Activated naive CD4-positive, alpha-beta T cell treated with anti-CD3 and anti-CD28 coated beads for 36 hours (primary cell): ENCODE measurements at regions of chr13 and their contacts with region 1.

Region 1: DNA sequence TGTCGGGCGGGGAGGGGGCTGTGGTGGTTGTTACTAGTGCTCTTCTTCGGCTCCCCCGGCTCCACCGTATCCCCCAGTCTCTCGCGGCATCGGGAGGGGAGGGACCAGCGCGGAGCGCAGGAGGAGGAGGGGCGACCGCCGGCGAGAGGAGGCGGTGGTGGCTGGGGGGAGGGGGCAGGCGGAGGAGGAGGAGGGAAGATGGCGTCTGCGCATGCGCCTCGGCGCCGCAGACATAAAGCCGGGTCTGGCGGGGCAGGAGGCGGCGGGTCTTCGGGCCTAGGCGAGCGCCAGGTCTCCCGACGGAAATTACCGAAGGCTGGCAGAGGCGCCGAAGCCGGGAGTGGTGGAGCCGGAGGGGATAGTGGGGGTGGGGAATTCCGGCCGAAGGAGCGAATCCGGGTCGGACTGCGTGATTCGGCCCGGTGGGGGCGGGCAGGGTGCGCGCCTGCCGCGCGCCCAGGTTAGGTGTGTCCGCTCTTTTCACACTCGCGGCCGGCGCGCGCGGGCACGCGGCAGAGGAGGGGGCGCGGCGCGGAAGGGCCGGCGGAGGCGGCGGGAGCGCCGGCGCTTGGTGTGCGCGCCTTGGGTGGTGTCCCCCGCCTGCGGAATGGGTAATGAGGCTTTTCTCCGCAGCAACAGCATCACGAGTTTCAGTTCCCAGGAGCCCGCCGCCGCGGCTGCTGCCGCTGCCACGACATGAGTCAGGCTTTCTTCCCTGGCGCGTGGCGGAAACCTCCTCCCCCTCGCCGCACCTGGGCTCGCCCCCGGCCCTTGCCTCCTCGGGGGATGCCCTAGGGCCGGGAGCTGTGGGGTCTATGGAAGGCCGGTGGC is 1.3 kb upstream of the TSC22D1 start:
- DNase-seq: peak; percentile 95
- H3K4me3 Mint-ChIP-seq: peak overlapping the region; percentile 95
- H3K27ac Mint-ChIP-seq: peak overlapping the region; percentile 88
- H3K4me1 Mint-ChIP-seq: peaks cover 34% of the 10 kb centered on the region
- H3K27me3 Mint-ChIP-seq: peaks cover 2% of the 10 kb centered on the region

Region 2: GRCh38 chr13:43878892-43879754 is 698.3 kb before region 1 on chr13 and contains the start of gene CCDC122:
- CTCF ChIA-PET with region 1: no interaction called
- intact Hi-C with region 1: loop called (anchors 5 kb)
- DNase-seq: peak; percentile 86
- H3K4me3 Mint-ChIP-seq: peak within 1 kb of the TSS; percentile 88
- H3K27ac Mint-ChIP-seq: peak within 1 kb of the TSS; percentile 83
- H3K4me1 Mint-ChIP-seq: peaks cover 23% of the 10 kb centered on the region
- H3K27me3 Mint-ChIP-seq: peaks cover 12% of the 10 kb centered on the region
- total RNA-seq, gene CCDC122: 2.1 to 2.2 TPM

Region 3: GRCh38 chr13:44259045-44260027 is 318.1 kb before region 1 on chr13:
- CTCF ChIA-PET with region 1: no interaction called
- intact Hi-C with region 1: loop called (anchors 5 kb)
- DNase-seq: peak; percentile 94
- H3K4me3 Mint-ChIP-seq: peak overlapping the region; percentile 62
- H3K27ac Mint-ChIP-seq: peak overlapping the region; percentile 88
- H3K4me1 Mint-ChIP-seq: peaks cover 24% of the 10 kb centered on the region
- H3K27me3 Mint-ChIP-seq: peaks cover 6% of the 10 kb centered on the region

Region 4: DNA sequence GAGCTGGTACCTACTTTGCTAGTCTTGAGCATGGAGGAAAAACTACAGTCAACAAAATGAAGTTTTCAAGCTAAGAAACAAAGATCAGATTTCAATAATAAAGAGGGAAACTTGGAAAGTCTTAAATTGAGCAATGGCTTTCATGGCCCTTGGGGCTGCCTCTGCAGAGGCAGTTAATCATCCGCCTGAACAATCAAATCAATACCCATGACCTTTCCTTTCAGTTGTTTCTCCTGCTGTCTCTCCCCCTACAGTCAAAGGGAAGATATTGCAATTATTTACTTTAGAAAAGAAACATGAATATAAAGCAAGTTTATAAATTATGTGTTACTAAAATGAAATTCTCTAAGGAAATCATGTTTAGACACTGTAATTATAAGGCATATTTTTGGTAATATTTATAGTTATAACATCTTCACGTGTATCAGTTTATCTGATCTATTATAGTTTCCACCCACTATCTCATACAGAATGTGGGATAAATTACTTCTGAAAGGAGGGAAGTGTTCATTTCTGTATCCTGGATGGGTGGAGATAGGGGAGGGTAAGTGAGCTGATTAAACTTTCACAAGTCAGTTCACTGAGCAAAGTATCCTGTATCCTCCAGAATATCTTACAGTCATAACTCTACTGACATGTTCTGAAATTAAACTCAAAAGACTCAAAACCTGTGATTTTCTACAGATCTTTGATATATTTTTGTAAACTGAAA is 71.1 kb after region 1 on chr13:
- CTCF ChIA-PET with region 1: no interaction called
- intact Hi-C with region 1: loop called (anchors 2 kb)
- DNase-seq: no peak
- H3K4me3 Mint-ChIP-seq: no peak overlapping the region
- H3K27ac Mint-ChIP-seq: no peak overlapping the region
- H3K4me1 Mint-ChIP-seq: peaks cover 14% of the 10 kb centered on the region
- H3K27me3 Mint-ChIP-seq: peaks cover 22% of the 10 kb centered on the region

Region 5: DNA sequence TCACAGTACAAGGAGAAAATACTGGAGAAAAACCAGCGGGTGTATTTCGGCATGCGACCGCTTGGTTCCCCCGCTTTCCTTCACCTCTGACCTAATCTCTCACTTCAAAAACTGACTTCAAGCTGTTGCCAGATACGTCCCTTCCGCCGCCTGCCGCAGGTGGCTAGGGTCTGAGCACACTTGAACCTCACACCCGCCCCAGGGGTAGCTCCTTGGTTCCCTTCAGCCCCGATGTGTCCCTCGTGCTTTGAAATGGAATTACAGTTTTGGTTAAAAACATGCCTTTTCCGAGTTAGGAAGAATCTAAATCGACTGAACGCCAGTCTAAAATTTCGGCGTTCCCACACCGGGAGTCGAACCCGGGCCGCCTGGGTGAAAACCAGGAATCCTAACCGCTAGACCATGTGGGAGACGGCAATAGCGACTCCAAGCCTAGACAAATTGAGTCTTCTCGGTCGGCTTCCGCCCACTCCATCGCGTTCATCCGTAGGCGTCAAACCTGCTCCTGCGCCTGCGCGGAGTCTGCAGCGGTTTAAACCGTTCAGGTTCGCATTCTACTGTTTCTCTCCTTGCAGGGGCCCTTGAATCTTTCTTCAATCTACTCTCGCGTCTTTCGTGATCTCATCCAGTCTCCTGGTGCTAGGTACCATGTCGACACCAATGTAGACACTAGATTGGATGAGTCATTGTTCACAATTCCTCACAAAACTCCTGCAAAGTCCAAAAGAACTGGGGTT is 340.3 kb after region 1 on chr13:
- CTCF ChIA-PET with region 1: interaction called, 3 read pairs
- intact Hi-C with region 1: loop called (anchors 1 kb)
- DNase-seq: peak; percentile 97
- H3K4me3 Mint-ChIP-seq: no peak overlapping the region
- H3K27ac Mint-ChIP-seq: no peak overlapping the region
- H3K4me1 Mint-ChIP-seq: peaks cover 3% of the 10 kb centered on the region
- H3K27me3 Mint-ChIP-seq: no peaks in the 10 kb centered on the region

Region 6: DNA sequence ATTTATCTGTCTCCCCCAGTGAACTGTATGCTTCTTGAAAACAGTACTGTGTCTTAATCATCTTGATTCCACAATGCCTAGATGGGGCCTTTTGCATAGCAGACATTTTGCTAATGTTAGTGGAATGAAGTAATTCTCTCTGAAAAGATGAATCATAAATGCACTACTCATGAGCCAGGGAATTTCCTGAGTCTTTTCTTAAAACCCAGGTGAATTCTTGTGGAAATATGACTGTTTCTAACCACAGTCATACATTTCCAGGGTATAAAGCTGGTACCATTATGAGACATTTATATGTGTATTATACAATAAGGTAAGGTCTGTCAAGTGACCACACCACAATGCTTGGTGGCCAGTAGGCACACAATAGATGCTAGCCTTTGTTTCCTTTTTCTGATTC is 628.9 kb after region 1 on chr13:
- CTCF ChIA-PET with region 1: no interaction called
- intact Hi-C with region 1: loop called (anchors 5 kb)
- DNase-seq: peak; percentile 33
- H3K4me3 Mint-ChIP-seq: no peak overlapping the region
- H3K27ac Mint-ChIP-seq: peak overlapping the region; percentile 37
- H3K4me1 Mint-ChIP-seq: peaks cover 31% of the 10 kb centered on the region
- H3K27me3 Mint-ChIP-seq: no peaks in the 10 kb centered on the region

Region 7: DNA sequence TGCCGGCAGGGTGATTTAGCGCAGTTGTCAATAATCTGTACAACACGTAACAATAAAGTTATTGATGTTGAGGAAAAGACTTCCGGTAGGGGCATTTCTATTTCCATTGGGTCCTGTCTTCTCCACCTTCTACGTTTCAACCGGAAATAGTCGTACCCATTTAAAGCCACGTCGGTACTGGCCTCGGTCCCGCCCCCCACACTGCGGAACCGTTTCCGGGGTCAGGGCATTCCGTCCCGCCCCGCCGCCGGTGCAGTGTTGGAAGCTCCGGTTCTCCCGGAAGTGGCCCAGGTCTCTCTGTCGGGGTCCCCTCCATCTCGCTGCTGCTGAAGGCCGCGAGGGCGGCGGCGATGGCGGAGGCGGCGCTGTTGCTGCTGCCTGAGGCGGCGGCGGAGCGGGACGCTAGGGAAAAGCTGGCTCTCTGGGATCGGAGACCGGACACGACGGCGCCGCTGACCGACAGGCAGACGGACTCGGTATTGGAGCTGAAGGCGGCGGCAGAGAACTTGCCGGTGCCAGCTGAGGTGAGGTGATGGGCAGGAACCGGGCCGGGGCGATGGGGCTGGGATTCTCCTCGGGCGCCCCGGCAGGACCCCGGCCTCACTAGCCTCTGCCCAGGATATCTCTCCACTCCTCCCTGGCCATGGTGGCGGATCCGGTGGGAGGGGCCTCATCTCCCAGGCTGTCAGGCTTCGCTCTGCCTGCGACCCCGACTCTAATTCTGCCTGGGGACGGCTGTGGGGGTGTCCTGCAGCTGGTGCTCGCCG is 887.4 kb after region 1 on chr13 and contains the start of gene COG3:
- CTCF ChIA-PET with region 1: no interaction called
- intact Hi-C with region 1: loop called (anchors 5 kb)
- DNase-seq: peak; percentile 97
- H3K4me3 Mint-ChIP-seq: peak within 1 kb of the TSS; percentile 88
- H3K27ac Mint-ChIP-seq: peak within 1 kb of the TSS; percentile 92
- H3K4me1 Mint-ChIP-seq: peaks cover 59% of the 10 kb centered on the region
- H3K27me3 Mint-ChIP-seq: no peaks in the 10 kb centered on the region
- total RNA-seq, gene COG3: 19.1 to 19.3 TPM